Sigmoid colon (tissue), 7 donors: ENCODE measurements at regions of chr6 and their contacts with region 1.

Region 1: DNA sequence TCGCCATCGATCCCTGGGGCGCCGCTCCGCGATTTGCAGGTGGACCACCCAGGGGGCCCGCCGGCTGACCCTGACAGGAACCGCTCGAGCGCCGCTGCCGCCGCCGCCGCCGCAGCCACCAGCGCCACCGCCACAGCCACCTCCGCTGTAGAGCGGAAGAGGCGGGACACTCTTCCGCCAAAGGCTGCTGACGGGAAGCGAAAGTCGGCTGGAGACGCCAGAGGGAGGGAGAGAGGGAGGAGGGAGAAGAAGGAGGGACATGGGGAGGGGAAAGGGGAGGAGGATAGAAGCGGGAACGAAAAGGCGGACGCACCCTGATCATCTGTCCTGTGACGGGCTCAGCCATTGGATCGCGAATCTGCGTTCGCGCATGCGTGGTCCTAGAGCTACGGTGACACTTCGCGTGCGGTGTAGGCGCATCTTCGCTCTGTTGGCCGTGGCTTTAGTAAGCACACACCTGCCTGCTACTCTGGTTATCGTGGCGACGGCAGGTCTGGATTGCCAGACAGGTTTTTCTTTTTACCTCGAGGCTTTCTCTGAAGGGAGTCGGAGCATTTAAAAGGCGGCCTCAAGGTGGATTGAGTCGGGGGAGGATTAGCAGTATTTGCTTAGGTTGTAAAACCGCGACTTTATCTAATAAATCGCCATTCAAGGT is at the start of gene TMEM30A:
- DNase-seq: peak; percentile 99
- H3K4me3 ChIP-seq: peak within 1 kb of the TSS; percentile 74 to 98 (median 90)
- H3K27ac ChIP-seq: peak within 1 kb of the TSS; percentile 92 to 93 (median 92)
- H3K4me1 ChIP-seq: peaks cover 0 to 57% (median 38%) of the 10 kb centered on the region in 4 donors
- H3K27me3 ChIP-seq: no peaks in the 10 kb centered on the region
- CTCF ChIP-seq: no peak
- EP300 ChIP-seq: peak in 1 of 4 donors; percentile 57
- POLR2A ChIP-seq: peak; percentile 69 to 79
- total RNA-seq, gene TMEM30A: 69.5 to 95.6 (median 92.6) TPM

Region 2: GRCh38 chr6:75217193-75217592 is 67.6 kb before region 1 on chr6:
- intact Hi-C with region 1: no loop called
- DNase-seq: no peak
- H3K4me3 ChIP-seq: no peak overlapping the region
- H3K27ac ChIP-seq: peak overlapping the region in 3 of 4 donors; percentile 25 to 37 (median 31)
- H3K4me1 ChIP-seq: peaks cover 0 to 19% (median 6%) of the 10 kb centered on the region in 4 donors
- H3K27me3 ChIP-seq: no peaks in the 10 kb centered on the region
- CTCF ChIP-seq: no peak
- EP300 ChIP-seq: no peak
- POLR2A ChIP-seq: no peak

Region 3: DNA sequence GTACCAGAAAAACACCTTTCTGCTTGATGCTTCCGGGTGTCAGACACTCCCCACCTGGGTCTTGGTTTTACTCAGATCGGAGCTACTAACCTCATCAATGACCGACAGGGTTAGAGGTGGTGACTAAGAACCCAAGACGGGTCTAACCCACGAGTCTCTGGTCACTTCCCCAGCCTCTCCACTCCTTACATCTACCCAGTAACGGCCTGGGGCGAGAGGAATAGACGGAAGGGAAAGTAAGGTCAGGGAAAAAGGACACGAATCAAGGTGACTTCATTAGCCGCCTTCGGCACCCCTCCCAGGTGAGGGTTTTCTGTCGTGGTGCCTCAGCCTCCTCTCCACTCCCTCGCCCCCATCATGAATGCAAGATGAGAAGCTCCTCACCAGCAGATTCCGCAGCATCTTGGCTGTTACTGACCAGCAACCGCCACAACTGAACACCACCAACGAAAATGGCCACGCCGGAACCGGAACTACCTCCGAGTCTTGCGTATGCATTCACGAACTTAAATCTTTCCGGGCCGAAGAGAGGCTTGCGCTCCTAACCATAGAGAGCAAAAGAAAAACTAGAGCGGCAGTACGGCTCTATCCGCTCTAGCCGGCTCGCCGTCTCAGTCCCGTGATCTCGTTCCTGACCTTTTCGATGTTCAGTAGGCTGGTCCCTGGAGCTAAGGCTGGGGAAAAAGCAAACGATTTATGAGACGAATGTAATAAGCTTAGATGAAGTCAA is 41.3 kb before region 1 on chr6 and contains the start of gene COX7A2:
- intact Hi-C with region 1: loop called (anchors 2 kb)
- DNase-seq: peak; percentile 96
- H3K4me3 ChIP-seq: peak within 1 kb of the TSS; percentile 73 to 94 (median 78)
- H3K27ac ChIP-seq: peak within 1 kb of the TSS; percentile 91 to 96 (median 93)
- H3K4me1 ChIP-seq: peaks cover 0 to 32% (median 24%) of the 10 kb centered on the region in 4 donors
- H3K27me3 ChIP-seq: no peaks in the 10 kb centered on the region
- CTCF ChIP-seq: no peak
- EP300 ChIP-seq: peak in 1 of 4 donors; percentile 63
- POLR2A ChIP-seq: peak; percentile 82 to 88
- total RNA-seq, gene COX7A2: 419 to 3,086 (median 644) TPM

Region 4: DNA sequence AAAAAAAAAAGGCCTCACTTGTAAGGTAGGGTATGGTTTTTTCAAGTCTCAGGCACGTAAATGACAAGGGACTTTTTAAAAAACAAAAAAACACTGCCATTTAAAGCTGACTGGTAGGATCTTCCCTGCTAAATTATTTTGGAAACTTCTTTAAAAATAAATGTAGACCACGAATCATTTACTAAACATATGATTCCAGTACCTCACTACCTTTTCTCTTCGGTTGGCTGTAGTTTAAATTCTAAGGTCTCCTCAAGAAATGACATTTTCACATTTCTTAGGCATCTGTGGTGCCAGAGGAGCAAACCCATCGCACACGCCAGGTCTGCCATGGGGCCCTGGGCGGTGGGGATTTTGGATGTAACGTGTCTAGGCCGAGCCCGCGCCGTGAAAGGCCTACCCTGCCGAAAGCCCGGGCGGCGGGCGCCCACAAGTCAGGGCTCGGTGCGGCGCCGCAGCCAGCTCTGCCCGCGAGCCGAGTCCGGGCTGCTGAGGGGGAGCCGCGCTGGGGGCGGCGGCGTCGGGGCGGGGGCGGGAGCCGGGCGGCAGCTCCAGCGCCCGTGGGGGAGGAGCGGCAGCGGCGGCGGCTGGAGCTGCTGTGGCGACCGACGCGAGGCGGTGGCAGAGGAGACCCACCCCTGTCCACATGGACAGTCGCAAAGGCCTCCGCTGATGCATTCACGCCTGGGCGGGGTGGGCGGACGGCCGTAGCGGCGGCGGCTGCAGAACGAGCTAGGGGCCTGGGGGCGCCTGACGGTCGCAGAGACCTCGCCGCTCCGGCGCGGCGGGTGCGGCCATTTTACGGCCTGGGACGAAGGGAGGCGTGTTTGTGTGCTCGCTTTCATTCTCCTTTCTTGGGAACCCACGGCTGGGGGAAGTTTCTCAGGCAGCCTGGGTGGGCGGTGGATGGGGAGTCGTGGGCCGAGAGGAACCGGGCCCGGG is 316.8 kb after region 1 on chr6 and contains the start of gene SENP6:
- intact Hi-C with region 1: loop called (anchors 5 kb)
- DNase-seq: peak; percentile 86
- H3K4me3 ChIP-seq: peak within 1 kb of the TSS; percentile 66 to 94 (median 88)
- H3K27ac ChIP-seq: peak within 1 kb of the TSS; percentile 97 to 98 (median 98)
- H3K4me1 ChIP-seq: peaks cover 0 to 62% (median 38%) of the 10 kb centered on the region in 4 donors
- H3K27me3 ChIP-seq: no peaks in the 10 kb centered on the region
- CTCF ChIP-seq: no peak
- EP300 ChIP-seq: no peak
- POLR2A ChIP-seq: peak; percentile 68 to 73
- total RNA-seq, gene SENP6: 122 to 157 (median 148) TPM